ENCODE measurements at regions of chr3 and their contacts with region 1.

Region 1: DNA sequence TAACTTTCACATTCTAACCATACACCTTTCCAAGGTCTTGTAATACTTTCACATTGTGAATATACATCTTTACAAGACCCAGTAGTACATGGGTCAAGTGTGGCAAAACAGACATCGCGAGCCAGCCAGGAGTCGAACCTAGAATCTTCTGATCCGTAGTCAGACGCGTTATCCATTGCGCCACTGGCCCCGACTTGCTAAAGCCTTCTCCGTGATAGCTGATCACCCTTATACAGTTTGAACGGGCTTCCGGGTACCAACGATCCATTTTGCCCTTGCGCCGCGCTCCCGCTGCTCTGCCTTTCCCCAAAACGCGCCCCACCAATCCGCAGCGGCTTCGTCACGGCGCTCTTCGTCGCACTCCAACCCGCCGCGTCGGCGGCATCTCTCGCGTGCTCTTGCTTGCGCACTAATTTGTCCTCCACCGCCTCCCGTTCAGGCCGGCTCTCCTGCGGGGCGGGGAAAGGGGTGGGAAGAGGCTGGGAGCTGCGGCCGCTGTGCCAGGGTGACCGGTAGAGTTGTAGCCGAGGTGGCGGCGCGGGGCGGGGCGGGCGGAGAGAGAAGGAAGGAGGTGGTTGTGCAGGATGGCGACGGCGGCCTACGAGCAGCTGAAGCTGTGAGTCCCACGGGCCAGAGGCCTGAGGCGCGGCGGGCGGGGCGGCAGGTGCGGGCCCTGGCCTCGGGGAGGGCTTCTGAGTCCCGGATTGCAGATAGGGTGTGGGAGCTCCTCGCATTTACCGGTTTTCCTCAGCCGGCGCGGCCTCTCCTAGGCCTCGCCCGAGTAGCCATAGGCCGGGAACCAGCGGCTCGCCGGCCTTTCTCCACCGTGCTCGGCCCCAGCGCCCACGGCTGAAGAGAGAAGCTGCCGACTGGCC is at the start of gene SACM1L:
- DNase-seq: peak; percentile 98
- H3K4me3 Mint-ChIP-seq: peak within 1 kb of the TSS; percentile 89
- H3K27ac Mint-ChIP-seq: peak within 1 kb of the TSS; percentile 92
- H3K4me1 Mint-ChIP-seq: peaks cover 49% of the 10 kb centered on the region
- H3K27me3 Mint-ChIP-seq: peaks cover 3% of the 10 kb centered on the region
- total RNA-seq, gene SACM1L: 101 to 103 TPM

Region 2: DNA sequence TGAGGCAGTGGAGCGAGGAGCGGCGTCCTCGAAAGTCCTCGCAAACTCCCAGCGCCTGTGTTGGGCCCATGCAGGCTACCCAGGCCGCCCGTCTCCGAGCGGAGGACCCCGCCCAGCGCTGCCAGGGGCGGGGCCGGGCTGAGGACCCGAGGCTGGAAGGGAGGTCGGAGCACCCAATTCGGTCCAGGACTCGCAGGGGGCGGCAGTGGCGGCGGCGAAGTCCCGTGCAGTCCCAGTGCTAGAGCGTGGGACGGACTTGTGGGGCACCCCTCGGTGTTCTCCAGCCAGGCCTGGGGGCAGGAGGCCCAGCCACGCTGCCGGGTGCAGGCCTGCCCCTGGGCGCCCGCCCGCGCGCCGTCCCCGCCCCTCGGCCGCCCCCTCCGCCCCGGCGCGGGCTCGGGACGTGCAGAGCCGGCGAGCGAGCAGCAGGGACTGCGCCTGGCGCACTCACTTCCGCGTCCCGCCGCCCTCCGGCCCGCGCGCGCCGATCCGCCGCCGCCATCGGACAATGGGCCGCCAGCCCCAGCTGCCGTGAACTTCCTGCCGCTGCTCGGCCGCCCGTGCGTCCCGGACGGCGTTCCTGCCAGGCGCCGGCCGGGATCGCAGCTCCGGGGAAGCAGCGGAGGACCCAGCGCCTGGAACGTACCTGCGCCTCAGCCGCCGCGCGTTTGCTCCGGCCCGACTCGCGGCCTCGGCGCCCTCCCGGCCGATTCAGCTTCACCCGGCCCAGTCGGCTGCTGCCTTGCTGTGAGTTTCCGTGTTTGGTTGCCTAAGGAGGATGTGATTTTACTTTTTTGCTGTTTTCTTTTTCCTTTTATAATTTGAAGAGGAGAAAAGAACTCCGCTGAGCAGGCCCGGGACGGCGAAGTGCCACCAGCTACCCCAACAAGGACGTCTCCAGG is 95.2 kb before region 1 on chr3:
- CTCF ChIA-PET with region 1: interaction called, 3 read pairs
- POLR2A ChIA-PET with region 1: interaction called, 12 read pairs
- DNase-seq: peak; percentile 79
- H3K4me3 Mint-ChIP-seq: peak overlapping the region; percentile 89
- H3K27ac Mint-ChIP-seq: peak overlapping the region; percentile 81
- H3K4me1 Mint-ChIP-seq: peaks cover 54% of the 10 kb centered on the region
- H3K27me3 Mint-ChIP-seq: peaks cover 5% of the 10 kb centered on the region

Region 3: DNA sequence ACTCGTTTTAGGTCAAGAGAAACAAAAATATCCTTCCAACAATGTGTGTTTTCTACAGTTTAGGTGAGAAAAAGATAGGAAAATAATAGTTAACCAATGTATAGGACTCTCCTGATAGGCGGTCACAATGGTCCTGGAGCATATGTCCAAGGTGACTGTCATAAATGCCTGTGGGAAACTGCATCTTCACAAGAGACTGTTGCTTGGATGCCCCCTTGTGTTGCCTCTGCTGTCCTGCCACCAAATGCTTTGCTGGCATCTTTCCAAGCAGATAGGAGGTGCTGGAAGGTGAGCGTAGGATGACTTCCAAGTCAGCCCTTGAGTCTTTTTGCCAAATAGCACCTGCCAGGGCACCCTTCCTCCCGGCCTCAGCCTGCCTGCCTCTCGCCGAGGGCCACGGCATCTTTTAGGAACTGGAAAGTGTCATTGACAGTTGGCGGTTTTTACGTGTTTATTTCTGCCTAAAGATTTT is 24.0 kb before region 1 on chr3:
- CTCF ChIA-PET with region 1: interaction called, 16 read pairs
- POLR2A ChIA-PET with region 1: interaction called, 20 read pairs
- DNase-seq: peak; percentile 66
- H3K4me3 Mint-ChIP-seq: peak overlapping the region; percentile 77
- H3K27ac Mint-ChIP-seq: peak overlapping the region; percentile 79
- H3K4me1 Mint-ChIP-seq: peaks cover 54% of the 10 kb centered on the region
- H3K27me3 Mint-ChIP-seq: no peaks in the 10 kb centered on the region